HepG2 (cell line): ENCODE measurements at regions of chr11 and their contacts with region 1.

Region 1: DNA sequence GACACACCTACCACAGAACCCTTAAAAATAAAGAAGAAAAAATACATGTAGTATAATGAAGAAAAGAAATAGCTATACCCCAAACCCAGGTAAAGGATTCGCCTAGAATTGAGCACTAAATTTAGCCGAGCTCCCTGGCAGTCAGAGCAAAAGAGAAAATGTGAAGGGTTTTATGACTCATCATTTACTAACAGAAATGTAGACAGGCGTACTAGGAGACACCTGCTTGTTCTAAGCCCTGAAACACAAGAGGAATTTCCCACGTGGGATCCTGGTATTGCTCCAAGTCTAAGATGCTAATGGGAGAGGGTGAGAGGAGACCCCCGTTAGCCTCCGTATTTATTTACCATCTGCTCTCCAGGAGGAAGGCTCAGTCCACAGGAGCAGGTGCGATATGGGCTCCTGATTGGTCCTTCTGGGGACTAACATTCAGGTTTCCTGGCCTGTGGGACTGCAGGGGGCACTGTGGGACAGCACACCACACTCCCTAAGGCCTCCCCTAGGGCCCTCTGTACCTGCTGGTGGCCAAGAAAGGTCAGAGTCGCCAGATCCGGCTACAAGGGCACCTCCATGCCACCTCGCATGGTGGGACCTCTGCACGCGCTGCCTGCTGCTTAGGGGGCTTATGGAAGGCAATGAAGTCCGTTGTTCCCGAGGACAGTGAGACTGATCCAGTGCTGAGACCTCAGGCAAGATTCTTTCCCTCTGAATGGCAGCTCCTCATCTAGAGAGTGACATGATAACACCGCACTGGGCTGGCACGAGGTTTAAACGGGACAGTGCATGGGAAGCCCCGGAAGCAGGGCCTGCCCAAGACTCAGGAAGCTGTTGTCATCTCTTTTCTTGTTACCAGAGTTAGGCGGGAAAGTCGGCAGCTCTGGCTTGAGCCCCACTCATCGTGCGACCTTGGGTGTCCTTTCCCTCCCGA is 25.8 kb downstream of the KCNC1 start:
- DNase-seq: peak; percentile 69
- ATAC-seq: peak; percentile 99
- H3K4me3 ChIP-seq: no peak overlapping the region
- H3K27ac ChIP-seq: no peak overlapping the region
- H3K4me1 ChIP-seq: peaks cover 11% of the 10 kb centered on the region; the same call in 1 of the 2 replicates
- H3K27me3 ChIP-seq: peaks cover 3 to 6% of the 10 kb centered on the region in 2 experiments; a peak in 3 of 5 replicates
- CTCF ChIP-seq: peak; percentile 98
- EP300 ChIP-seq: no peak
- POLR2A ChIP-seq: no peak
- RAD21 ChIP-seq: peak; percentile 96

Region 2: GRCh38 chr11:17730608-17731462 is 29.5 kb before region 1 on chr11:
- CTCF ChIA-PET with region 1: no interaction called
- POLR2A ChIA-PET with region 1: no interaction called
- in situ Hi-C with region 1: no loop called
- intact Hi-C with region 1: loop called (anchors 1 kb)
- DNase-seq: peak; percentile 64
- ATAC-seq: peak; percentile 87
- H3K4me3 ChIP-seq: no peak overlapping the region
- H3K27ac ChIP-seq: no peak overlapping the region
- H3K4me1 ChIP-seq: no peaks in the 10 kb centered on the region
- H3K27me3 ChIP-seq: peaks cover 5 to 21% of the 10 kb centered on the region in 2 experiments; a peak in 3 of 5 replicates
- CTCF ChIP-seq: peak; percentile 95
- EP300 ChIP-seq: no peak
- POLR2A ChIP-seq: no peak
- RAD21 ChIP-seq: peak; percentile 81

Region 3: GRCh38 chr11:17827006-17827405 is 66.6 kb after region 1 on chr11:
- CTCF ChIA-PET with region 1: interaction called, 3 read pairs
- POLR2A ChIA-PET with region 1: no interaction called
- in situ Hi-C with region 1: no loop called
- intact Hi-C with region 1: loop called (anchors 1 kb)
- DNase-seq: peak; percentile 7
- ATAC-seq: peak; percentile 62; the same call in 2 of the 3 replicates
- H3K4me3 ChIP-seq: no peak overlapping the region
- H3K27ac ChIP-seq: no peak overlapping the region
- H3K4me1 ChIP-seq: no peaks in the 10 kb centered on the region
- H3K27me3 ChIP-seq: no peaks in the 10 kb centered on the region
- CTCF ChIP-seq: peak; percentile 43
- EP300 ChIP-seq: no peak
- POLR2A ChIP-seq: no peak
- RAD21 ChIP-seq: no peak

Region 4: GRCh38 chr11:17906436-17906835 is 146.1 kb after region 1 on chr11:
- CTCF ChIA-PET with region 1: interaction called, 4 read pairs
- POLR2A ChIA-PET with region 1: no interaction called
- in situ Hi-C with region 1: no loop called
- intact Hi-C with region 1: loop called (anchors 5 kb)
- DNase-seq: no peak
- ATAC-seq: peak; percentile 86
- H3K4me3 ChIP-seq: no peak overlapping the region
- H3K27ac ChIP-seq: no peak overlapping the region
- H3K4me1 ChIP-seq: no peaks in the 10 kb centered on the region
- H3K27me3 ChIP-seq: no peaks in the 10 kb centered on the region
- CTCF ChIP-seq: peak; percentile 55
- EP300 ChIP-seq: no peak
- POLR2A ChIP-seq: no peak
- RAD21 ChIP-seq: no peak

Region 5: GRCh38 chr11:18105802-18106574 is 345.6 kb after region 1 on chr11 and contains the start of gene SAAL1:
- CTCF ChIA-PET with region 1: no interaction called
- POLR2A ChIA-PET with region 1: no interaction called
- in situ Hi-C with region 1: no loop called
- intact Hi-C with region 1: loop called (anchors 10 kb)
- DNase-seq: peak; percentile 73
- ATAC-seq: peak; percentile 99
- H3K4me3 ChIP-seq: peak within 1 kb of the TSS; percentile 85 to 98 (median 96)
- H3K27ac ChIP-seq: peak within 1 kb of the TSS; percentile 52
- H3K4me1 ChIP-seq: peaks cover 21% of the 10 kb centered on the region
- H3K27me3 ChIP-seq: no peaks in the 10 kb centered on the region; a peak in 1 of 5 replicates
- CTCF ChIP-seq: peak; percentile 98
- EP300 ChIP-seq: no peak
- POLR2A ChIP-seq: peak; percentile 38 to 88; a peak in 3 of 4 replicates
- RAD21 ChIP-seq: peak; percentile 79
- total RNA-seq, gene SAAL1: 45.7 and 46.0 TPM in 2 replicates